A549 (cell line): ENCODE measurements at regions of chr12 and their contacts with region 1.

Region 1: DNA sequence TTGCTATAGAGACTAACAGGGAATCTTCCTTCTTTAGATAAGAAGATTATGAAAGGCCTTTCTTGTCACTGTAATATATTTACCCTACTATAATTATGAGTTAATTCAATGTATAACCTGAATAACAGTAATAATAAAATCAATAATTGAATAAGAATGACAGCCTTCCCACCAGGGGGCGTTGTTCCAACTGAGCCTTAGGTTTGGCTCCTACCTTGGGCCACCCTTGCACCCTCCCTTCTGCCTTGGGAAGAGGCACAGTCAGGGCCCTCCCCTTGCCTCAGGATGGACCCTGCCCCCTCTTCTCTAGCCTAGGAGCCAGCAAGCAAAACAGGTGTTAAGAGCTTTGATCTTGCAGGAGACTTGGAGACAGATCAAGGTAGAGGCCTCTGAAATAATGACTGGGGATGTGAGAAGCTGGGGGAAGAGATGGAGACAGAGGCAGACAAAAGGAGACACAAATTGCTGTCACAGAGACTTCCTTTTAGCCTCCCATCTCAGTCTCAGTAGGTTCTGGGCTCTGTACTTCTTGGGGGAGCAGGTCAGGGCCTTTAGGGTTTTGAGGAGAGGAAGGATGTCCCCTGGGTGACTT is 40.1 kb upstream of the CISTR start:
- DNase-seq: peak in 1 of 2 experiments; percentile 42
- ATAC-seq: 0 out of 6 replicates have a peak, but pooled peaks of 1 of the 2 experiments have one; percentile 51
- H3K4me3 ChIP-seq: no peak overlapping the region
- H3K27ac ChIP-seq: no peak overlapping the region
- H3K4me1 ChIP-seq: peaks cover 9% of the 10 kb centered on the region; the same call in 1 of the 3 replicates
- CTCF ChIP-seq: peak; percentile 54
- EP300 ChIP-seq: no peak
- POLR2A ChIP-seq: no peak
- RAD21 ChIP-seq: peak; percentile 40 to 53; a peak in 4 of 5 replicates

Region 2: DNA sequence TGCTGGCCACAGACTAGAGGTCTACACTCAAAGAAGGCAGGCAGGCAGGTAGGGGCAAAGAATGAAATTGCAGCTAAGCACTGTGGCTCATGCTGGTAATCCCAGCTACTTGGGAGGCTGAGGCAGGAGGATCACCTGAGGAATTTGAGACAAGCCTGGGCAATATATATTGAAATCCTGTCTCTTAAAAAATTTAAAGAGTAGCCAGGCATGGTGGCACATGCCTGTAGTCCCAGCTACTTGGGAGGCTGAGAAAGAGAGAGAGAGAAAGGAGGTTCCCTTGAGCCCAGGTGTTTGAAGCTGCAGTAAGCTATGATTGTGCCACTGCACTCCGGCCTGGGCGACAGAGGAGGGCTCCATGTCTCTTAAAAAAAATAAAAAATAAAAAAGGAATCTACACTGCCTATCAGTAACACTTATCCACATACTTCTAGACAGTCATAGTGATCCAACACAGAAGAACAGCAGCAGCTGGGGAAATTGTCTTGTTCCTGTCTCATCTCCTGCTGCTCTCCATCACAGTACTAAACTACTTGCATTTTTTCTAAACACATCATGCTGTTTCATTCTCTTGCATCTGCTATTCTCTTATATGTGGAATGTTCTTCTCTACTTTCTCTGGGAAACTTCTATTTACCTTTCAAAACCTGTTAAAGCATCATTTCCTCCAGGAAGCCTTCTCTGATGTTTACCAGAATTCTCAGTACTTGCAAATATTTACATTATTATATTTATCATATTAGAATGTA is 222.8 kb before region 1 on chr12:
- CTCF ChIA-PET with region 1: no interaction called
- POLR2A ChIA-PET with region 1: no interaction called
- DNase-seq: no peak
- ATAC-seq: no peak; a peak in 1 of 6 replicates
- H3K4me3 ChIP-seq: no peak overlapping the region
- H3K27ac ChIP-seq: peak overlapping the region; percentile 45 to 49; a peak in 4 of 6 replicates
- H3K4me1 ChIP-seq: peaks cover 28% of the 10 kb centered on the region; the same call in 2 of the 3 replicates
- CTCF ChIP-seq: no peak
- EP300 ChIP-seq: no peak
- POLR2A ChIP-seq: no peak
- RAD21 ChIP-seq: no peak

Region 3: GRCh38 chr12:53781228-53781801 is 10.5 kb before region 1 on chr12:
- CTCF ChIA-PET with region 1: interaction called, 11 read pairs
- POLR2A ChIA-PET with region 1: no interaction called
- DNase-seq: no peak
- ATAC-seq: no peak
- H3K4me3 ChIP-seq: no peak overlapping the region
- H3K27ac ChIP-seq: no peak overlapping the region
- H3K4me1 ChIP-seq: 0 out of 3 replicates have a peak, but pooled peaks cover 2% of the 10 kb centered on the region
- CTCF ChIP-seq: no peak
- EP300 ChIP-seq: no peak
- POLR2A ChIP-seq: no peak
- RAD21 ChIP-seq: no peak